ENCODE measurements at regions of chr5 and their contacts with region 1.

Region 1: DNA sequence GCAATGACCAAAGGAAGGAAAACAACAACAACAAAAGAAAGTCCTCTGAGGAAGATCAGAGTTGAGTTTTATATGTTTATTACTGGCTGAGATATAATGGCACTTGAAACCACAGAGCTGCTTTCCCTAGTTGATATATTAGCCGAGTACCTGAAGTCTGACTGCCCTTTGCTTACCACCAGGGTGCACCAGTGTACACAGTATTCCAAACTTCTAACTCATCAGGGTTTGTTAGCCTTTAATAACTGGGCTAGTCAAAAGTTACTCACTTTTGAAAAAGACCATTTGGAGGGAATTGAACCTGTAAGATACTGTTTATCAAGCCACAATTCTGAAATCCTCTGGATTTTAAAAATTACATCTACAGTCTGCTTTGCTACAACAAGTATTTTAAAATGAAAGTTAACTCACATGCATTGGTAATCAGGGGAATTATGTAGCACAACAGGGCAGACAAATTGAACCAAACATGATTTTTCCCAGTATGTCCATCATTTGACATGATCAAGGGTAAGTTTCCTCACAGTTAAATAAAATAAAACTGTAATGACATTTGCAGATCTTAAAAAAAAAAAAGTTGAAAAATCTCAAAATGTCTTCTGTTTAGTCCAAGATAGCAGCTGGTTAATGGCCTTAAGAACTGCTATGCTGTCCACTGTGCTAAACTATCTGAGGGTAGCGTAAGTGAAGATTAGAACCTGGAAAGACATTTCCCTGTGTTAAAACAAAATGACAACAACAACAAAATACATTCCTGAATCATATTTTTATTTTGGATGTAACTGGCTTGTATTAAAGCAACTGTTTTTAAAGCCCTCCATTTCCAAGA is 57.3 kb upstream of the C6 start:
- DNase-seq: no peak
- ATAC-seq: peak; percentile 86
- H3K4me3 ChIP-seq: peak overlapping the region in 1 of 2 donors; percentile 26
- H3K27ac ChIP-seq: no peak overlapping the region
- H3K4me1 ChIP-seq: no peaks in the 10 kb centered on the region
- H3K27me3 ChIP-seq: no peaks in the 10 kb centered on the region

Region 2: DNA sequence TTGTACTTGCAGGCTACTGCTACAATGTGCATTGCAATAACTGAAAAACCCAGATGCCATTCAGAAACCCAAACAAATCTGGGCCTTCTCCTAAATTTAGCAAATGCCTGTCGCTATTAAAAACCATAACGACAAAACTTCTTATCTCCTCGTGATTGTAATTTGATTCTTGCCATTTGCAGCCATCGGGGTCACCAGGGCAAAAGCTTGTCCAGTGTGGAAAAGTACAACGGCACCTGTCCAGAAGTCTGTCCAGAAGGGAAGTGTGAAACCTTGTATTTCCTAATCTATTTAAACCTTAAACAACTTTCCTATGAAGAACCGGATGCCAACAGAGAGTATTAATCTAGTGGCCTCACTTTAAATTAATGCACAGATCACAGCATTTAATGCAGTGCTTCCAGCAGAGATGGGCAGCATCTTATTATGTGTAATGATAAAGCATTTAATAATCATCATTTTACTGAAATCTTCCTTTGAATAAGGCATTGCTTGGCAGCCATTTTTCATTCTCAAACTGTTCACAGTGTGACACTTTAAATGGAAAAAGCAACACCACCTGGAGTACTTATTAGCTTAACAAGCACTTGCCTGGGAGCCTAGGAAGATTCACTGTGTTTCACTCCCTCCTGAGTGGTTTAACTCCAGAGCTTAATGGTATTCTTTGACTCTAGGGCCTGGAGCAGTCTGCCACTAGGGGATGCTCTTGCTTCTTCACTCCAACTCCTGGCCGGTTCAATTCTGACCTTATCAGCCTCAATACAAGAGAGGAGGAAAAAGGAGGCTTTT is 366.2 kb before region 1 on chr5:
- intact Hi-C with region 1: loop called in 1 of 2 experiments (anchors 10 kb)
- DNase-seq: peak in 1 of 2 donors; percentile 63
- ATAC-seq: peak; percentile 90
- H3K4me3 ChIP-seq: no peak overlapping the region
- H3K27ac ChIP-seq: no peak overlapping the region
- H3K4me1 ChIP-seq: no peaks in the 10 kb centered on the region
- H3K27me3 ChIP-seq: no peaks in the 10 kb centered on the region

Region 3: DNA sequence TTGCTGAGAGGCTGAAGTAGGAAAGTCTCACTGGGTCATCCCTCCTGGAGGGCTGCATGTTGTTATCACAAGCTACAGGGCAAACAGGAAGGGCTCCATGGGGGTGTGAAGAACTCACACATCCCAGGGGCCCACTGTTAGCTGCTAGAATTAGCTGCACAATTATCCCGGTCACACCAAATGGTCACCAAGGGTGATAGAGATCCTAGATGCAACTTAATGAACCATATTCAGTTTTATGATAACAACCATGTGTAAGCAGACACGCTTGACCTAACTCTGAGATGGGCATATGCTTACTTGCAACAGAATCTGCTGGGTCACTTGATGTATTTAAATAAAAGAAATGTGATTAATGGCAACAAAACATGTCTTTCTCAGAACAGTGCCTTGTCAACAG is 86.1 kb after region 1 on chr5:
- intact Hi-C with region 1: no loop called
- DNase-seq: no peak
- ATAC-seq: no peak
- H3K4me3 ChIP-seq: no peak overlapping the region
- H3K27ac ChIP-seq: no peak overlapping the region
- H3K4me1 ChIP-seq: no peaks in the 10 kb centered on the region
- H3K27me3 ChIP-seq: no peaks in the 10 kb centered on the region

Region 4: DNA sequence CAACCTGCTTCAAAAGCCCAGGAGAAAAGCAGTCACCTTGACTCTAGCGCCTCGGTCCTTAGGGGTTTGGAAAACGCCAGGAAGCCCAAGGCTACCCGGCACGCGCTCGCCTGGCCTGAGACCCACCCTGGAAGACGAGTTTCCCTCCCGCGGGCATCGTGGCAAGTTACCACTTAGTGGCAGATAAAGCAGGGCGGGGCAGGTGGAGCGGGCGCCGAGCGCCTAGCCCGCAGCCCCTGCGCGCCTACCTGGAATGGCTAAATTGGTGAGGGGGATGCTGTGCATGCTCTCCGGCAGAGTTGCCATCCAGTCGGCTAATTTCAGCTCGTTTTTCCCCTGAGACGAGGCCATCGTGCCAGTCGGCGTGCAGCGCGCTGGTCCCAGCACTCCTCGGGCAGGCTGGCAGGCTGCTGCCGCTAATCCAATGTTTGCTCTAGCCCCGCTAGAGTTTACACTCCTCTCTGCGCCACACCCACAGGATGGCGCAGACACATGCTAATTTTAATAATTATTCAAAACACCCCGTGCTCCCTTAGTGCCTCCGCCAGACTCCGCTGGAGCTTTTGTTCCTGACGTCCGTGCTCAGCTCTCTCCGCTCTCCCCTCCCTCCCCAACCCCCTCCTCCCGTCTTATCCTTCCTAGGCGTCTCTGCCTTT is 239.7 kb after region 1 on chr5 and contains the start of gene PLCXD3:
- intact Hi-C with region 1: loop called in 1 of 2 experiments (anchors 10 kb)
- DNase-seq: peak in 1 of 2 donors; percentile 72
- ATAC-seq: peak; percentile 83
- H3K4me3 ChIP-seq: peak within 1 kb of the TSS; percentile 35 to 42
- H3K27ac ChIP-seq: no peak within 1 kb of the TSS
- H3K4me1 ChIP-seq: no peaks in the 10 kb centered on the region
- H3K27me3 ChIP-seq: no peaks in the 10 kb centered on the region
- total RNA-seq, gene PLCXD3: 13.9 to 14.5 TPM

Region 5: GRCh38 chr5:41524174-41524573 is 253.5 kb after region 1 on chr5:
- intact Hi-C with region 1: loop called (anchors 10 kb)
- DNase-seq: no peak
- ATAC-seq: no peak
- H3K4me3 ChIP-seq: no peak overlapping the region
- H3K27ac ChIP-seq: no peak overlapping the region
- H3K4me1 ChIP-seq: peaks cover 0 to 2% of the 10 kb centered on the region in 2 donors
- H3K27me3 ChIP-seq: no peaks in the 10 kb centered on the region

Region 6: DNA sequence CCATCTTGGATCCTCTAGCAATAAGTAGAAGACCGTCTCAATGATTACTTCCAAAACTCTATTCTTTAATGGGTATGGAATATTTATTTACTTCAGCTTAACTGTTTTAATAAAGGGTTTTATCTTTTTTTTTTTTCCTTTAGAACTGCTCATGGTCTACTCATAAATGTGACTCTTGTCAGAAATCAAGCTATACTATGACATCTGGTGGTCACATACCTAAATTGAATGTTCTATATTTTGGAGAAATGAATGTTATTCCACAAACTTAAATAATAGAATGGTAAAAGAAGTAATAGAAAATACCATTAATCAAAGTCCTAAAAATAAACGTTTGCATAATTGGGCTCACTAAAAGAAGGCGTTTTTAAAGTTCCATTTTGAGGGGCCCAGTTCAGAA is 371.0 kb after region 1 on chr5:
- intact Hi-C with region 1: loop called (anchors 5 to 10 kb)
- DNase-seq: no peak
- ATAC-seq: no peak
- H3K4me3 ChIP-seq: no peak overlapping the region
- H3K27ac ChIP-seq: no peak overlapping the region
- H3K4me1 ChIP-seq: peaks cover 0 to 2% of the 10 kb centered on the region in 2 donors
- H3K27me3 ChIP-seq: no peaks in the 10 kb centered on the region

Region 7: DNA sequence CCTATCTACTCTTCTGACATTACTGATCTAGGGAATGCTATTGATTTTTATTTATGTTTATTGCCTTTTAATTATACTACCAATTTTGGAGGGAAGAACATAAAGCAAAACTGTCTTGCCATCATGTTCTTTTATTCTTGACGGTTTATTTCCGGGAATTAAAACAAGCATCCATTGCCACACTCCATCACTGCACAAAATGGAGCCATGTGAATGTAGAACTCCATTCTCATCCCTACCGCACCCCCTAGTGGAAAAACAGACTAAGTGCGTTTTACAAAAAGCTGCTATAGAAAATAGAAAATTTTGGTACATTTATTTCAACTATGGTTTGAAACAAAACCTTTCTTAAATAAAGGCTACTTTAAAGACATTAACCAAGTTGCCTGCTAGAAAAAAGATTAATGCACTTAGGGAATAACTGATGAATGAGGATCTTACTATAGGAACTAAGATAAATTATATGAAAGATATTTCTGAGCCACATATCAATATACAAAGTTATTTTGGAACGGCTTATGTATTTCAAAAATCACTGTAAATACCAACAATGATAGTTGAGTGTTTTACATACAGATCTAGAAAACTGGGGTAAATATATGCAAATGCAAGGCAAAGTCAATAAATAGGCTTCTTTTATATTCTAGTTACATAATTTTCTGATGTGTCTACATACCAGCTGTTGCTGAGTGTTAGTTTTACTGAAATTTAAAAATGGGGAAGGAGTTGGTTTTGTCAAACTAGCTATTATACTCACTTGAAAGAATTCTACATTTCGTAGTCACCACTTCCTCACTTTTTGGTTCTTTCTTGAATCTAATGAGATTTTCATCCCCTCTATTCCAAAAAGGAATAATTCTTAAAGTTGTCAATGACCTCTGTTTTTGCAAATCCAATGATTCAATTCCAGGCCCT is 573.1 kb after region 1 on chr5:
- intact Hi-C with region 1: loop called (anchors 5 kb)
- DNase-seq: no peak
- ATAC-seq: no peak
- H3K4me3 ChIP-seq: no peak overlapping the region
- H3K27ac ChIP-seq: no peak overlapping the region
- H3K4me1 ChIP-seq: peaks cover 0 to 2% of the 10 kb centered on the region in 2 donors
- H3K27me3 ChIP-seq: no peaks in the 10 kb centered on the region